T-cell (primary cell): ENCODE measurements at regions of chr10 and their contacts with region 1.

Region 1: DNA sequence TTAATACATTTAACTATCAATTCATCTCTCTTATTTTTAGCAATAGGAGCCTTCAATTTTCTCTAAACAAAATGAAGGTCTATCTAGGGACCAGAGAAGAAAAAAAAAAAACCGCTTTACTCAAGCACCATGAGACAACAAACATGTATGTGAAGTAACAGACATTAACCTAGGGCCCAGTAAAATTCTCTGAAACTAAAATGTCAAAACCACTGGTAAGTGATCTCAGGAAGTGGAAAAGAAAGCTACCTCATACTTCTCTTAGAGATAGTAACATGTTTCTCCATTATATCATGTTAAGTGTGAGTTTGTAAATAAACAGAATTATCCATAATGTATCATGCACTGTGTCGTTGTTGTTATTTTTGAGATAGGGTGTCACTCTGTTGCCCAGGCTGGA is 35.4 kb upstream of the PTER start:
- DNase-seq: no peak
- ATAC-seq: no peak
- H3K4me3 ChIP-seq: no peak overlapping the region
- H3K4me3 Mint-ChIP-seq: no peak overlapping the region
- H3K27ac ChIP-seq: no peak overlapping the region
- H3K27ac Mint-ChIP-seq: no peak overlapping the region
- H3K4me1 ChIP-seq: no peaks in the 10 kb centered on the region
- H3K4me1 Mint-ChIP-seq: no peaks in the 10 kb centered on the region
- H3K27me3 ChIP-seq: peaks cover 0 to 8% of the 10 kb centered on the region in 2 experiments
- H3K27me3 Mint-ChIP-seq: peaks cover 1 to 6% of the 10 kb centered on the region in 2 donors

Region 2: DNA sequence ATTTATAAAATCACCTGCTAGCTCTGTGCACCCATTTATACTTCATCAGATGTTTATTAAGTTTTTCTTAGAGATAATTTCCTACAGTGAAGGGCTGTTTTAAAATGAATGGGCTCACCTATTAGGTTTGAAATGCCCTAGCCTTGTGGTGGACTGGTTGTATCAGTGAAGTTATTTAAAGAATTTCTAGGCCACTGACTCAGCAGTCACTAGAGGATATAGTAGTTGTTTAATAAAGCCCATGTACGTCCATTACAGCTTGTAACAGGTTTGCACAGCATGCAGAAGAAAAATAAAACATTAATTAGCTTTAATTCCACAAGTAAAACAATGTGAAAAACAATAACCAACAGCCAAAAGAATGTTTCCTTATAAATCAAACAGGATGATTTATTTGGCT is 287.8 kb after region 1 on chr10:
- CTCF ChIA-PET with region 1: interaction called in 1 of 2 experiments, 12 read pairs
- POLR2A ChIA-PET with region 1: no interaction called
- DNase-seq: no peak
- ATAC-seq: no peak
- H3K4me3 ChIP-seq: no peak overlapping the region
- H3K4me3 Mint-ChIP-seq: no peak overlapping the region
- H3K27ac ChIP-seq: no peak overlapping the region
- H3K27ac Mint-ChIP-seq: no peak overlapping the region
- H3K4me1 ChIP-seq: no peaks in the 10 kb centered on the region
- H3K4me1 Mint-ChIP-seq: no peaks in the 10 kb centered on the region
- H3K27me3 ChIP-seq: no peaks in the 10 kb centered on the region
- H3K27me3 Mint-ChIP-seq: no peaks in the 10 kb centered on the region

Region 3: GRCh38 chr10:16742165-16742960 is 340.9 kb after region 1 on chr10:
- CTCF ChIA-PET with region 1: no interaction called
- POLR2A ChIA-PET with region 1: no interaction called
- DNase-seq: no peak
- ATAC-seq: no peak
- H3K4me3 ChIP-seq: no peak overlapping the region
- H3K4me3 Mint-ChIP-seq: no peak overlapping the region
- H3K27ac ChIP-seq: no peak overlapping the region
- H3K27ac Mint-ChIP-seq: no peak overlapping the region
- H3K4me1 ChIP-seq: no peaks in the 10 kb centered on the region
- H3K4me1 Mint-ChIP-seq: peaks cover 0 to 11% (median 2%) of the 10 kb centered on the region in 3 donors
- H3K27me3 ChIP-seq: no peaks in the 10 kb centered on the region
- H3K27me3 Mint-ChIP-seq: no peaks in the 10 kb centered on the region